ENCODE measurements at regions of chr11 and their contacts with region 1.

Region 1: DNA sequence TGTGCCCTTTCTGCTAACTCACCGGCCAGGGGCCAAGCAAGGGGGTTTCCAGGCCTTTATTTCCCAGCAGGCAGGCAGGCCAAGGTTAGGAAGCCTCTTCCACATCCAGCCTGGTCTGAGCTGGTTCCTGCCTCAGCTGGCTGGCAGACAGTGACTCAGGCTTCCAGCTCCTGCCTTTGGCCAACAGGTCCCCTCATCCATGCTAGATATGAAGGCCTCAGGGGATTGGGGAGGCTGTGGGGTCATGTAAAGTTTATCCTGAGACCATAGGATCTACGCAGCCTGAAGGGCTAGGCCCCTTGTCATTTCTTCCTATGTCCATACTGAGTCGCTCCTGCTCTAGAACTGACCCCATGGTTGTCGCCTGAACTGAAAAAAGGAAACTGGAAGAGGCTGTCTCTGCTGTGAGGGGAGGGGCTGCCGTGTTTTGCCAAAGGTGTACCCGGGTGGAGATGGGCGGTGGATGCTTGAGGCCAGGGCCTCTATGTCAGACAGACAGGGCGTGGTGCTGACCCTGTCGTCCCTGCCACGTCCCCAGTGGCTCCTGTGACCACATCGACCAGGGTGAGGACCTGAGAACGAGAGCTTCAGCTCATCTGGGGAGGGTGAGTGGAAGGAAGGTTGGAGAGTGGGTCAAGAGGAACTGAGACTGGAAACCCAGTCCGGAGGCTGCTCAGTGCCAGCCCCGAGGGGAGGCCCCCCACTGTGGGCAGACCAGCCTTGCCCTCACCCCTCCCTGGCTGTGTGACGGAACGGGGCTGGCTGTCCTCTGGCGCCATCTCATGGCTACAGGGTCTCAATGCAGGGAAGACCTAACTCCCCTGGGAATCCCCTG is 17.0 kb downstream of the P2RY6 start:
- DNase-seq: peak; percentile 92
- H3K4me3 ChIP-seq: peak overlapping the region in 1 of 2 experiments; percentile 25; a peak in 1 of 4 replicates
- H3K27ac ChIP-seq: peak overlapping the region; percentile 35 to 48
- H3K4me1 ChIP-seq: peaks cover 9 to 29% of the 10 kb centered on the region in 2 experiments
- H3K27me3 ChIP-seq: no peaks in the 10 kb centered on the region
- CTCF ChIP-seq: peak; percentile 95
- EP300 ChIP-seq: no peak
- RAD21 ChIP-seq: peak; percentile 97

Region 2: GRCh38 chr11:72831513-72832300 is 457.4 kb before region 1 on chr11:
- CTCF ChIA-PET with region 1: interaction called, 35 read pairs
- POLR2A ChIA-PET with region 1: no interaction called
- DNase-seq: peak; percentile 88
- H3K4me3 ChIP-seq: no peak overlapping the region; a peak in 1 of 4 replicates
- H3K27ac ChIP-seq: no peak overlapping the region; a peak in 1 of 4 replicates
- H3K4me1 ChIP-seq: peaks cover 5 to 10% of the 10 kb centered on the region in 2 experiments; a peak in 2 of 4 replicates
- H3K27me3 ChIP-seq: no peaks in the 10 kb centered on the region
- CTCF ChIP-seq: peak; percentile 97
- EP300 ChIP-seq: no peak
- RAD21 ChIP-seq: peak; percentile 98

Region 3: DNA sequence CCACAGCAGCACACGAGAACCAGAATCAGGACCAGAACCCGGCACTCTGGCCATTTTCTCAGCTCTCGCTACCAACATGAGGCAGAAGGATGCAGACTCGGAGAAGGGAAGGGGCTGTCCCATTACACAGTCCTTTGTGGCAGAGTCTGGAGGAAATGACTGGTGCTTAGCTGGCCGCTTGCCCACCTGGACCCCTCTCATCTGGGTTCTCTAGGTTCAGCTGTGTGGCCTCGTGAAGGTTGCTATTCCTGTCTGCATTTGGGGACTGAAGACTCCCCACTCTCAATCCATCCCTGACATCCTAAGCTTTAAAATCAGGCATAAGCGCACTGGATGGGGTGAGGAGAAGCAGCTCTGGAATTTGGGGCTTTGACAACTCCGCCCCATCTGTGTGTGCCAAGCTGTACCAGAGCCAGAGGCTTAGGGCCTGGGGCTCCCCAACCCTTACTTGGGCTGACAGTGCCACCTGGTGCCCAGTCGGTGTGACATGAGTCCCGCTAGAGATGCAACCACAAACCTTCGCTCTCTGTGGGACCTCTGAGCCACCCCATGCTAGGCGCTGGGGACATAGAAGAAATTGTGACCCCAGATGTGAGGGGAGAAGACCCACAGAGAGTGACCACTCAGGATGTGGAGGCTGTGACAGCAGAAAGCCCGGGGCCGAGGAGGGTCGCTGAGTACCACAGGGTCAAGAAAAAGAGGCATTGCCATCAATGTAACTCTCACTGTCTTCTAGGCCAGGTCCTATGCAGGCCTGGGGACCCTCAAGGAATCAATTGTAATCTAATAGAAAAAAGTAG is 111.1 kb before region 1 on chr11:
- CTCF ChIA-PET with region 1: interaction called, 109 read pairs
- POLR2A ChIA-PET with region 1: no interaction called
- DNase-seq: peak; percentile 86
- H3K4me3 ChIP-seq: no peak overlapping the region; a peak in 1 of 4 replicates
- H3K27ac ChIP-seq: no peak overlapping the region
- H3K4me1 ChIP-seq: peaks cover 5 to 10% of the 10 kb centered on the region in 2 experiments; a peak in 2 of 4 replicates
- H3K27me3 ChIP-seq: no peaks in the 10 kb centered on the region; the same call in 1 of the 2 replicates
- CTCF ChIP-seq: peak; percentile 79
- EP300 ChIP-seq: no peak
- RAD21 ChIP-seq: peak; percentile 98

Region 4: GRCh38 chr11:73236854-73237253 is 52.2 kb before region 1 on chr11:
- CTCF ChIA-PET with region 1: interaction called, 283 read pairs
- POLR2A ChIA-PET with region 1: no interaction called
- DNase-seq: peak; percentile 63
- H3K4me3 ChIP-seq: no peak overlapping the region; a peak in 1 of 4 replicates
- H3K27ac ChIP-seq: no peak overlapping the region
- H3K4me1 ChIP-seq: peaks cover 0 to 7% of the 10 kb centered on the region in 2 experiments; a peak in 1 of 4 replicates
- H3K27me3 ChIP-seq: no peaks in the 10 kb centered on the region
- CTCF ChIP-seq: peak; percentile 62
- EP300 ChIP-seq: no peak
- RAD21 ChIP-seq: peak; percentile 53

Region 5: DNA sequence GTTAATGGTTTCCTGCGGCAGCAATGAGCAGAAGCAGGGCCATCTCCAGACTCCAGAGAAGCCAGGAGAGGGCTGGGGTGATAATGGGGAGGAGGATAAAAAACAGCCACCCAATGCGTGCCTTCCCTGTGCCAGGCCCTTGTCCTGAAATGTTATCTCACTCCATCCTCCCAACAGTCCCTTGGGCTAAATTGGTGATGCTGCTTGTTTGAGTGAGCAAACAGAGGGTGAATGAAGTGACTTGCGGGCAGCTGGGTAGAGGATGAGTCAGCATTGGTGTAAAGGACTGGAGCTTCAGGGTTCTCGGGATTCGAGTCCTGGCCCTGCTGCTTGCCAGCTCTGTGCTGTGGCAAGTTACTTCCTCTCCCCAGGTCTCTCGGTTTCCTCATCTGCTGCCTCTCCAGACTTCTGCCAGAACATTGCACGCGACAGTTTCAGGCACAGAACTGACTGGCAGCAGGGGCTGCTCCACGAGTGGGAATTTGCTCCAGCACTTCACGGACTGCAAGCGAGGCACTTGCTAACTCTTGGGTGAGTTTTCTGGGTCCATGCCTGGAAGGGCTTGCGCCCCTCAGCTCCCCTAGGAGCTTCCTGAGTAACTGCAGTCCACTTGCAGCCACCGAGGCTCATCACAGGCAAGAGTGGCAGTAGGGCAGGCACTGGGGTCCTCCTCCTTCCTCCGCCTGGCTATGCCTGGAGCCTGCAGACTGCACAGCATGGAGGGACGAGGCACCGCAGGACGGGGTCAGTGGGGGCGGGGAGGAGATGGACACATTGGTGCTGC is 17.0 kb before region 1 on chr11 and contains the start of gene P2RY6:
- CTCF ChIA-PET with region 1: interaction called, 179 read pairs
- POLR2A ChIA-PET with region 1: interaction called, 4 read pairs
- DNase-seq: peak; percentile 87
- H3K4me3 ChIP-seq: no peak within 1 kb of the TSS
- H3K27ac ChIP-seq: peak within 1 kb of the TSS; percentile 28 to 97; a peak in 3 of 4 replicates
- H3K4me1 ChIP-seq: peaks cover 3 to 62% of the 10 kb centered on the region in 2 experiments; a peak in 2 of 4 replicates
- H3K27me3 ChIP-seq: no peaks in the 10 kb centered on the region
- CTCF ChIP-seq: no peak
- EP300 ChIP-seq: peak in 1 of 2 experiments; percentile 95; a peak in 2 of 4 replicates
- RAD21 ChIP-seq: peak; percentile 19
- polyA plus RNA-seq, gene P2RY6: 0.15 and 0.16 TPM in 2 replicates

Region 6: GRCh38 chr11:73335204-73335923 is 46.3 kb after region 1 on chr11:
- CTCF ChIA-PET with region 1: interaction called, 132 read pairs
- POLR2A ChIA-PET with region 1: no interaction called
- DNase-seq: peak; percentile 83
- H3K4me3 ChIP-seq: peak overlapping the region; percentile 1 to 7; a peak in 2 of 4 replicates
- H3K27ac ChIP-seq: peak overlapping the region; percentile 97 to 98
- H3K4me1 ChIP-seq: peaks cover 48 to 58% of the 10 kb centered on the region in 2 experiments
- H3K27me3 ChIP-seq: no peaks in the 10 kb centered on the region
- CTCF ChIP-seq: peak; percentile 99
- EP300 ChIP-seq: no peak; a peak in 1 of 4 replicates
- RAD21 ChIP-seq: peak; percentile 98

Region 7: GRCh38 chr11:73393479-73394380 is 104.6 kb after region 1 on chr11:
- CTCF ChIA-PET with region 1: interaction called, 14 read pairs
- POLR2A ChIA-PET with region 1: no interaction called
- DNase-seq: peak; percentile 94
- H3K4me3 ChIP-seq: no peak overlapping the region; a peak in 1 of 4 replicates
- H3K27ac ChIP-seq: no peak overlapping the region
- H3K4me1 ChIP-seq: no peaks in the 10 kb centered on the region; a peak in 1 of 4 replicates
- H3K27me3 ChIP-seq: no peaks in the 10 kb centered on the region
- CTCF ChIP-seq: peak; percentile 81
- EP300 ChIP-seq: no peak
- RAD21 ChIP-seq: peak; percentile 92

Region 8: GRCh38 chr11:73521621-73522020 is 232.5 kb after region 1 on chr11:
- CTCF ChIA-PET with region 1: no interaction called
- POLR2A ChIA-PET with region 1: no interaction called
- DNase-seq: no peak
- H3K4me3 ChIP-seq: no peak overlapping the region
- H3K27ac ChIP-seq: peak overlapping the region; percentile 28 to 65; a peak in 3 of 4 replicates
- H3K4me1 ChIP-seq: peaks cover 6 to 27% of the 10 kb centered on the region in 2 experiments
- H3K27me3 ChIP-seq: no peaks in the 10 kb centered on the region
- CTCF ChIP-seq: no peak
- EP300 ChIP-seq: no peak
- RAD21 ChIP-seq: no peak